Activated naive CD4-positive, alpha-beta T cell treated with anti-CD3 and anti-CD28 coated beads for 36 hours (primary cell): ENCODE measurements at regions of chr1 and their contacts with region 1.

Region 1: DNA sequence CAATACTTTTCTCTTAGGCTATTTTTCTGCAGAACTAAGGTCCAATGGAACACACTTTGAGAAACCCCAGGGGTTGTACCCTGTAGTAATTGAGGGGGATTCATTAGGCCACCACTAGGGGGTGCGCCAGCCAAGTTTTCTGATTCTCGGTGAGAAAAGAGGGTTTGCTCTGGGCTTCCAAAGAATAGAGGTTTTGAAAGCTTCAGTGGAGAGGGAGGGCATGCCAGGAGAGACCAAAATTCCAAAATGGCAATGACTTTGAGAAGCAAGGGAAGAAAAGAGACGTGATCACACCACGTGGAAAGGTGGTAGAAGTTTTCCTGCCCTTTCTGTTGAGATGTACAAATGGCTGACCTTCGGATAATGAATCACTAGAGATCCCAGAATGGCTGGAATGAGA is 323.3 kb downstream of the RPS6KC1 start:
- DNase-seq: peak; percentile 78
- H3K4me3 Mint-ChIP-seq: no peak overlapping the region
- H3K27ac Mint-ChIP-seq: no peak overlapping the region
- H3K4me1 Mint-ChIP-seq: no peaks in the 10 kb centered on the region
- H3K27me3 Mint-ChIP-seq: no peaks in the 10 kb centered on the region

Region 2: DNA sequence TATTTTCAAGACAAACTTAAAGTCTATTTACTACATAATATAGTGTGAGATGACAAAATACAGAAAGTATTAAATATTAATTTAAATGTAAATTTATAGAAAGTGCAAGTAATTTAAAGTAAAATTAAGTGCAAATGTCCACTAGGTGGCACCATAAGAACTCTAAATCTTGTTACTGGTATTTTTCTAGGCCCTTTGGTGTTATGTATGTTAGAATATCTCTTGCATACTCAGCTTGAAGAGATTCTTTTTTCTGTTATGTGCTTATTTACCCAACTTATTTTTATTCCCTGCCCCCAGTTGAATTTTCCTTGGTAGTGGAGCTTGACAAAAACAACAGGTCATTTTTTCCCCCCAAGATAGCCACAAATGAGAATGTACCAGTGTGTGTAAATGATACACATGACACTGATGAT is 251.8 kb before region 1 on chr1:
- CTCF ChIA-PET with region 1: interaction called, 7 read pairs
- intact Hi-C with region 1: loop called (anchors 5 kb)
- DNase-seq: no peak
- H3K4me3 Mint-ChIP-seq: no peak overlapping the region
- H3K27ac Mint-ChIP-seq: no peak overlapping the region
- H3K4me1 Mint-ChIP-seq: no peaks in the 10 kb centered on the region
- H3K27me3 Mint-ChIP-seq: no peaks in the 10 kb centered on the region

Region 3: DNA sequence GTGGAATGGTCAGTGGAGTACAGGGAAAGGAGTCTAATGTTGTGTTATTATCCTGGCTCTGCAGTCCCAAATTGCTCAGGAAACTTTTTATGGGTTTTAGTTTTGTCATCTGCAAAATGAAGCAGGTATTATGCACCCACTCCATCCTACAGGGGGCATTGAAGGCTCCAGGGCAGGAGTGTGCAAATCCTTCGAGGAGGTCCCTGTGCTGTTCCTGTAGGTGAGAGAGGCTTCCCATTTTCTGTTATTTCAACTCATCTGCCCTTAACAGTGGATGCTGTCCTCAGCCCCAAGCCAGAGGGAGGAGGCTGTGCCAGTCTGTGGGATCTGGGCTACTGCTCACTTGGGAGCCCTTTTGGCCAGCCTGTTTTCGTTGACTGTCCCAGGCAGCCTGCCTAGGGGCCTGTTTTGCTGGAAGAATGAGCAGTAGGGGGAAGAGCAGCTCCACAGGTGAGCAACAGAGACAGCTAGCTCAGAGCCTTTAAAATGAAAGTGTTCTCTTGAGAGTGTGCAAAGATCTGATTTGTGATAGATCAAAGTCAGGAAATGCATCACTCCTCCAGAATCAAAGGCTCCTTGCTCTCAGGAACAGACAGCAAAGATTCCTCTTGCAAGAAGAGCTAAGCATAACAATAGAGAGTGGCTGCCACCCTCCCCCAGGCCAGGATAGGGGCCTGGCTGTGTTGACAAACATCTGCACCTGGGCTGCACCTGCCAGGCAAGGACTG is 295.8 kb after region 1 on chr1:
- CTCF ChIA-PET with region 1: no interaction called
- intact Hi-C with region 1: loop called (anchors 5 kb)
- DNase-seq: peak; percentile 49
- H3K4me3 Mint-ChIP-seq: no peak overlapping the region
- H3K27ac Mint-ChIP-seq: no peak overlapping the region
- H3K4me1 Mint-ChIP-seq: peaks cover 14% of the 10 kb centered on the region
- H3K27me3 Mint-ChIP-seq: no peaks in the 10 kb centered on the region

Region 4: DNA sequence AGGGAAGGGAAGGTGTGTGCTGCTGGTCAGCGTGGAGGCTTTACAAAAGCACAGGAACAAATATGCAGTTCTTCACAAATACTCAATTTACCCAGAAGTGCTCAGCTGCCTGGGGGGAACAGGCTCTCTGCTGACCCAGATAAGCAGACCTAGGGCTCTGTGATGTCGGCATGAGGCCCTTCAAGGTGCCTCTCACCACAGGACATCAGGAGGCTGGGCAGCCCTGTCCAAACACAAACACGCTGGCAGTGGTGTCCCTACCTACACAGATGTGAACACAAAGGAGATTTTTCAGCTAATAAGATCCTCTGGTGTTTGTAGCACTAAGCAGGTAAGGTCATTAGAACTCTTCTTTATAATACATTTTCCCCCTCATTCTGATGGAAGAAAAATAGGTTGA is 370.4 kb after region 1 on chr1:
- CTCF ChIA-PET with region 1: no interaction called
- intact Hi-C with region 1: no loop called
- DNase-seq: no peak
- H3K4me3 Mint-ChIP-seq: no peak overlapping the region
- H3K27ac Mint-ChIP-seq: no peak overlapping the region
- H3K4me1 Mint-ChIP-seq: no peaks in the 10 kb centered on the region
- H3K27me3 Mint-ChIP-seq: no peaks in the 10 kb centered on the region